ENCODE measurements at regions of chr10 and their contacts with region 1.

Region 1: GRCh38 chr10:80187465-80188409 is 17.6 kb downstream of the ANXA11 start:
- DNase-seq: peak; percentile 72 to 96 (median 83)
- ATAC-seq: peak; percentile 93
- H3K4me3 ChIP-seq: peak overlapping the region; percentile 42
- H3K4me3 Mint-ChIP-seq: peak overlapping the region; percentile 80
- H3K27ac ChIP-seq: peak overlapping the region; percentile 76 to 84
- H3K27ac Mint-ChIP-seq: peak overlapping the region; percentile 91
- H3K4me1 ChIP-seq: peaks cover 85% of the 10 kb centered on the region
- H3K4me1 Mint-ChIP-seq: peaks cover 90% of the 10 kb centered on the region
- H3K27me3 ChIP-seq: no peaks in the 10 kb centered on the region
- H3K27me3 Mint-ChIP-seq: no peaks in the 10 kb centered on the region
- CTCF ChIP-seq: no peak

Region 2: GRCh38 chr10:80078448-80079311 is 109.1 kb before region 1 on chr10 and contains the start of gene TMEM254:
- CTCF ChIA-PET with region 1: no interaction called
- POLR2A ChIA-PET with region 1: interaction called, 11 read pairs
- intact Hi-C with region 1: no loop called
- DNase-seq: peak; percentile 77 to 94 (median 88)
- ATAC-seq: peak; percentile 76
- H3K4me3 ChIP-seq: peak within 1 kb of the TSS; percentile 99
- H3K4me3 Mint-ChIP-seq: peak within 1 kb of the TSS; percentile 85
- H3K27ac ChIP-seq: peak within 1 kb of the TSS; percentile 86 to 90
- H3K27ac Mint-ChIP-seq: peak within 1 kb of the TSS; percentile 74
- H3K4me1 ChIP-seq: peaks cover 17% of the 10 kb centered on the region
- H3K4me1 Mint-ChIP-seq: peaks cover 30% of the 10 kb centered on the region
- H3K27me3 ChIP-seq: no peaks in the 10 kb centered on the region
- H3K27me3 Mint-ChIP-seq: no peaks in the 10 kb centered on the region
- CTCF ChIP-seq: no peak
- total RNA-seq, gene TMEM254: 4.0 to 5.6 TPM

Region 3: GRCh38 chr10:80315391-80315790 is 127.7 kb after region 1 on chr10:
- CTCF ChIA-PET with region 1: no interaction called
- POLR2A ChIA-PET with region 1: no interaction called
- intact Hi-C with region 1: no loop called
- DNase-seq: no peak
- ATAC-seq: no peak
- H3K4me3 ChIP-seq: no peak overlapping the region
- H3K4me3 Mint-ChIP-seq: no peak overlapping the region
- H3K27ac ChIP-seq: no peak overlapping the region
- H3K27ac Mint-ChIP-seq: no peak overlapping the region
- H3K4me1 ChIP-seq: no peaks in the 10 kb centered on the region
- H3K4me1 Mint-ChIP-seq: no peaks in the 10 kb centered on the region
- H3K27me3 ChIP-seq: no peaks in the 10 kb centered on the region
- H3K27me3 Mint-ChIP-seq: no peaks in the 10 kb centered on the region
- CTCF ChIP-seq: no peak

Region 4: DNA sequence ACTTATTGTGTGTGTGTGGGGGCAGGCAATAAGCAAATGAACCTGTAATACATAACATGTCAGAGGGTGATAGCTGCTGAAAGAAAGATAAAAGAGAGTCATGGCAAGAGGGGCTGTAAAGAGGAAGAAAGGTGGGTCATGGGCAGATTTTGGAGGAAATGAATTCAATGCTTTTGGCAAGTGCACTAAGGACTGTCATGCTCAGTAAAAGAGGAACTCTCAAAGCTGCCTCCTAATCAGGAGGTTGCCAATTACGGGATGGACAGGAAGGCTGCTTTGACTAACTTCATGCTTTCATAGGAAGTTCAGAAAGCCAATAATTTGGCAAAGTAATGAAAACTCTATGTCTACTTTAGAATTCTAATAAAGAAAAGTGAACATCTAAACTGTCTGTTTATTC is 751.2 kb after region 1 on chr10:
- CTCF ChIA-PET with region 1: no interaction called
- POLR2A ChIA-PET with region 1: no interaction called
- intact Hi-C with region 1: no loop called
- DNase-seq: no peak
- ATAC-seq: no peak
- H3K4me3 ChIP-seq: no peak overlapping the region
- H3K4me3 Mint-ChIP-seq: no peak overlapping the region
- H3K27ac ChIP-seq: no peak overlapping the region
- H3K27ac Mint-ChIP-seq: no peak overlapping the region
- H3K4me1 ChIP-seq: no peaks in the 10 kb centered on the region
- H3K4me1 Mint-ChIP-seq: no peaks in the 10 kb centered on the region
- H3K27me3 ChIP-seq: no peaks in the 10 kb centered on the region
- H3K27me3 Mint-ChIP-seq: peaks cover 18% of the 10 kb centered on the region
- CTCF ChIP-seq: no peak